ENCODE measurements at regions of chr13 and their contacts with region 1.

Region 1: DNA sequence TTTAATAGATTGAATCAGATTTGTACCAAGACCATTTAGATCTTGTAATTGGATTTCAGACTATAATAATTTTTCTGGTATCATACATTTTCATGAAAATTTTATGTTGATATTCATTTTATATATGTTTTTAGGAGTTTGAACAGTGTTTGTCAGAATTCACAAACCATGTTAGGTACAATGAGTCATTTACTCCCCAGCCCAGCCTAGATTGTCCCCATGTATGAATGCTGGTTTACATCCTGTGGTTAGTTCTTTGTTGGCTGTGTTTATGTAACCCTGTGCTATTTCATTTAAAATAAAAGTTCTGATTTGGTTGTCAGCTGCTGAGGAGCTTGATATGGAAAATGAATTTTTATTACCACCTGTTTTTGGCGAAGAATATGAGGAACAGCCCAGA is 96.7 kb downstream of the GJA3 start:
- DNase-seq: peak; percentile 77
- ATAC-seq: peak; percentile 82
- H3K4me3 ChIP-seq: no peak overlapping the region
- H3K27ac ChIP-seq: no peak overlapping the region
- H3K4me1 ChIP-seq: no peaks in the 10 kb centered on the region
- H3K27me3 ChIP-seq: no peaks in the 10 kb centered on the region
- CTCF ChIP-seq: no peak
- POLR2A ChIP-seq: no peak
- RAD21 ChIP-seq: no peak

Region 2: GRCh38 chr13:20019043-20019442 is 45.1 kb before region 1 on chr13:
- CTCF ChIA-PET with region 1: no interaction called
- POLR2A ChIA-PET with region 1: no interaction called
- dilution Hi-C with region 1: no loop called
- in situ Hi-C with region 1: no loop called
- intact Hi-C with region 1: loop called (anchors 10 kb)
- DNase-seq: no peak
- ATAC-seq: no peak
- H3K4me3 ChIP-seq: no peak overlapping the region
- H3K27ac ChIP-seq: no peak overlapping the region
- H3K4me1 ChIP-seq: no peaks in the 10 kb centered on the region
- H3K27me3 ChIP-seq: no peaks in the 10 kb centered on the region
- CTCF ChIP-seq: no peak
- POLR2A ChIP-seq: no peak
- RAD21 ChIP-seq: no peak

Region 3: GRCh38 chr13:20049558-20050473 is 14.3 kb before region 1 on chr13:
- CTCF ChIA-PET with region 1: no interaction called
- POLR2A ChIA-PET with region 1: no interaction called
- dilution Hi-C with region 1: no loop called
- in situ Hi-C with region 1: no loop called
- intact Hi-C with region 1: loop called (anchors 2 kb)
- DNase-seq: no peak
- ATAC-seq: no peak
- H3K4me3 ChIP-seq: no peak overlapping the region
- H3K27ac ChIP-seq: no peak overlapping the region
- H3K4me1 ChIP-seq: no peaks in the 10 kb centered on the region
- H3K27me3 ChIP-seq: no peaks in the 10 kb centered on the region
- CTCF ChIP-seq: no peak
- POLR2A ChIP-seq: no peak
- RAD21 ChIP-seq: no peak